BJ (cell line): ENCODE measurements at regions of chr7 and their contacts with region 1.

Region 1: DNA sequence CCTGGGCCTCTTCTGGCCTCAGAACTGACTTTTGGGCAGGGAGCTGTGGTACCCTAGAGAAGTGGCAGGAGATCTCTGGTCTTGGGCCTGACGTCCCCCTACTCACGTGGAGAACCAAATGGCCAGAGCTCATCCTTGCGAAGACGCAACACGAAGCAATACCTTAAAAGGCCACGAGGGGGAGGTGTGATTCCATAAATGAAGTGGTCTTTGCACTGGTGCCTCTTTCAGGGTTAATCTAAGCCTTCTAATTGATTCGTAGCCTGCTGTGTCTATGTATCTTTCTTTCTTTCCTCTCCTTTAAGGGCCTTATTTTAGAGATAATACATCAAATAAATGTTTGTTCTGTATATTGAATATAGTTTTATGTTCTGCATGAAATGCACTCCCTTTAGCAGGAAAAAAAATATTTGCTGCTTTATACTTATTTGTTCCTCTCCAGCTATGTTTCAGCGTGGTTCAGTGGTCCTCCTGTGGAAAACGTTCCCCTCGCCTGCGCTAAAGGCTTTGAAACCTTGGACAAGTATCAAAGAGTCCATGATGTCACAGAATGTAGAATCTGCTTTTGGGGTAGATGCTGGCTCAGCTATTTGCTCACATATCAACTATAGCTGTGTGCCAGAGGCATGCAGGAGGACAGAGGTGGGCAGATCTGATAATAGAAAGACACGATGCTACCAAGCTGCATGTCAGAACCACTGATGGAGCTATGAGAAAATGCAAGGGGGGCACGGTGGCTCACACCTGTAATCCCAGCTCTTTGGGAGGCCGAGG is 41.0 kb downstream of the STRA8 start:
- DNase-seq: no peak
- H3K4me3 ChIP-seq: no peak overlapping the region
- H3K27me3 ChIP-seq: peaks cover 1% of the 10 kb centered on the region; the same call in 1 of the 2 replicates
- CTCF ChIP-seq: peak; percentile 79

Region 2: DNA sequence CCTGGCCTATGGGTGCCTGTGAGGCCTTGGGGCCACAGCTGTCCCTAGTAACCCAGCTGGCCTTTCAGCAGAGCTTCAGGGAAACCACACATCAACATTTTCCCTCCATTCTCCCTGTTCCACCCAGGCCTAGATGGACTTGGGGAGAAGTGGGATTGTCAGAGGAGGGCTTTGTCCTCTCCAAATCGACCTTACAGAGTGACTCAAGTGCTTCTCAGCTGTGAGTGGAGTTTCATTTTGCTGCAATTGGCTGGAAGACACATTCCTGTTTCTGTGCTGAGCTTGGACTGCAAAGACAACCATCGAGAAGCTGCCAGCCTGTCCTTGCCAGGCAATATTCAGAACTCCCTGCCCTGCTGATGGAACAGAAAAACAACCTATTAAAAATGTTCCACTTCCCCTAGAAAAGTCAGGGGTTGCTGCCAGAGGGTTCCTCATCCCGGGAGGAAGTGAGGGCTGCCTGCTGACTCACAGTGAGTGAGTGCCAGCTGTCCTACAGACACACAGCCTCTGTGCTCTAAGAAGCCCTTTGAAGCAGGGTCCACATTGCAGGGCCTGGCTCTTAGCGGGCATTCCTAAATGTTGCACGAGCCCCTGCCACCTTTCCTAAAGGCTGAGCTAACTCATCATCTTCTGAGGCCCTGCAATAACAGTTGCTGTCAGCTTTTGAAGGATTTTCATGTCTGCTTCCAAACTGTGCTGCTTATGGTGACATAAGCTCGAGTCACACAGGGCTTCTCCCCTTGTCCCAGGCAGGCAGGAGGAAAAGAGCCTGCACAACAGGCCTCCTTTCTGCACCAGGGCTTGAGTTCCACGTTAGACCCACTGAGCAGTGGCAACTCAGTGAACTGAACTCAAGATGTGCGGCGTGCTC is 20.5 kb before region 1 on chr7:
- CTCF ChIA-PET with region 1: interaction called, 34 read pairs
- POLR2A ChIA-PET with region 1: no interaction called
- DNase-seq: peak; percentile 31
- H3K4me3 ChIP-seq: no peak overlapping the region
- H3K27me3 ChIP-seq: no peaks in the 10 kb centered on the region; the same call in 1 of the 2 replicates
- CTCF ChIP-seq: no peak

Region 3: GRCh38 chr7:135260930-135261721 is 13.6 kb before region 1 on chr7:
- CTCF ChIA-PET with region 1: interaction called, 34 read pairs
- POLR2A ChIA-PET with region 1: no interaction called
- DNase-seq: no peak
- H3K4me3 ChIP-seq: no peak overlapping the region
- H3K27me3 ChIP-seq: no peaks in the 10 kb centered on the region; the same call in 1 of the 2 replicates
- CTCF ChIP-seq: no peak

Region 4: DNA sequence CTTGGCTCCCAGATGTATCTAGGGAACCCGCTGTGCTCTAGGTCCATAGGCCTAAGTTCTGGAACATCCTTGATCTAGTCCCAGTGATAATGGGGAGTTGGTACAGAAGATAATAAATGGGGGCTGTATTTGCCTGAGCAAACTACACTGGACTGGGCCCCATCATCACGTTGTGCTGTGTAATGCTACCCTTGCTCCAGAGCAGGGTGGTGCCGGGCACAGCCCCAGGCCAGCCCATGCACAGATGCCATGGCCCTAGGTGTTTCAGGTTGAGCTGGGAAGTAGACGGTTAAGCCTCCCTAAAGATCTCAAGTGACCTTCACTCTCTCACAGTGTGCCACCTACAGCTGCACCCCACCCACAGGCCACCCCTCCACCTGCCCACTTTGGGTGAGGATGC is 12.2 kb after region 1 on chr7:
- CTCF ChIA-PET with region 1: interaction called, 27 read pairs
- POLR2A ChIA-PET with region 1: no interaction called
- DNase-seq: no peak
- H3K4me3 ChIP-seq: no peak overlapping the region
- H3K27me3 ChIP-seq: no peaks in the 10 kb centered on the region
- CTCF ChIP-seq: no peak

Region 5: GRCh38 chr7:135558337-135558767 is 283.7 kb after region 1 on chr7:
- CTCF ChIA-PET with region 1: interaction called, 16 read pairs
- POLR2A ChIA-PET with region 1: no interaction called
- DNase-seq: peak; percentile 6
- H3K4me3 ChIP-seq: peak overlapping the region; percentile 93
- H3K27me3 ChIP-seq: no peaks in the 10 kb centered on the region
- CTCF ChIP-seq: peak; percentile 66

Region 6: GRCh38 chr7:135771961-135772638 is 497.4 kb after region 1 on chr7:
- CTCF ChIA-PET with region 1: no interaction called
- POLR2A ChIA-PET with region 1: no interaction called
- DNase-seq: no peak
- H3K4me3 ChIP-seq: no peak overlapping the region
- H3K27me3 ChIP-seq: no peaks in the 10 kb centered on the region; the same call in none of the 2 replicates
- CTCF ChIP-seq: no peak